Common myeloid progenitor, CD34-positive (primary cell): ENCODE measurements at regions of chr9 and their contacts with region 1.

Region 1: GRCh38 chr9:73093740-73094379 is 57.8 kb upstream of the ANXA1 start:
- DNase-seq: peak in 2 of 3 donors; percentile 19 to 21
- H3K4me3 ChIP-seq: peak overlapping the region in 2 of 7 experiments; percentile 15 to 46
- H3K27ac ChIP-seq: no peak overlapping the region
- H3K4me1 ChIP-seq: no peaks in the 10 kb centered on the region
- H3K27me3 ChIP-seq: no peaks in the 10 kb centered on the region

Region 2: GRCh38 chr9:73104342-73104741 is 10.5 kb after region 1 on chr9:
- CTCF ChIA-PET with region 1: interaction called, 12 read pairs
- POLR2A ChIA-PET with region 1: no interaction called
- DNase-seq: peak in 1 of 3 donors; percentile 8
- H3K4me3 ChIP-seq: no peak overlapping the region
- H3K27ac ChIP-seq: no peak overlapping the region
- H3K4me1 ChIP-seq: no peaks in the 10 kb centered on the region
- H3K27me3 ChIP-seq: no peaks in the 10 kb centered on the region